CD14-positive monocyte (primary cell): ENCODE measurements at regions of chr21 and their contacts with region 1.

Region 1: DNA sequence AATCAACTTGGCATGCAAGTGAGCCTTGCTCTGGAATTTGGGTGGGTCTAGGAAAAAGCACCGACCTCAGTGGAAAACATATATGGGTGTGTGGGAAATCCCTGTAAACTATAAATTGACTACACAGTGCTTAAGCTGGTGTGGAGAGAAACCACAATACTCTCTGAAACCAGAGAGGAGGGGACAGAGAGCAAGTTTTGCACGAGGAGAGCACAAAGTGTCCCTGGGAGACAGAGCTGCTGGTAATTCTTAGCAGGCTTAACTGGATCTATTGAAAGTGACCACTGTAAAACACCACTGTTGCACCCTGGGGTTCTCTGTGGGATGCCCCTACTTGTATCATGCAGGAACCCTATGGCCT is 12.8 kb downstream of the KCNJ15 start:
- DNase-seq: no peak
- H3K4me3 ChIP-seq: no peak overlapping the region
- H3K4me3 Mint-ChIP-seq: no peak overlapping the region
- H3K27ac ChIP-seq: no peak overlapping the region
- H3K27ac Mint-ChIP-seq: peak overlapping the region in 1 of 7 donors; percentile 54
- H3K4me1 ChIP-seq: peaks cover 74 to 95% of the 10 kb centered on the region in 2 donors
- H3K4me1 Mint-ChIP-seq: peaks cover 87% of the 10 kb centered on the region
- H3K27me3 ChIP-seq: no peaks in the 10 kb centered on the region
- H3K27me3 Mint-ChIP-seq: peaks cover 0 to 3% (median 0%) of the 10 kb centered on the region in 3 donors
- CTCF ChIP-seq: no peak

Region 2: DNA sequence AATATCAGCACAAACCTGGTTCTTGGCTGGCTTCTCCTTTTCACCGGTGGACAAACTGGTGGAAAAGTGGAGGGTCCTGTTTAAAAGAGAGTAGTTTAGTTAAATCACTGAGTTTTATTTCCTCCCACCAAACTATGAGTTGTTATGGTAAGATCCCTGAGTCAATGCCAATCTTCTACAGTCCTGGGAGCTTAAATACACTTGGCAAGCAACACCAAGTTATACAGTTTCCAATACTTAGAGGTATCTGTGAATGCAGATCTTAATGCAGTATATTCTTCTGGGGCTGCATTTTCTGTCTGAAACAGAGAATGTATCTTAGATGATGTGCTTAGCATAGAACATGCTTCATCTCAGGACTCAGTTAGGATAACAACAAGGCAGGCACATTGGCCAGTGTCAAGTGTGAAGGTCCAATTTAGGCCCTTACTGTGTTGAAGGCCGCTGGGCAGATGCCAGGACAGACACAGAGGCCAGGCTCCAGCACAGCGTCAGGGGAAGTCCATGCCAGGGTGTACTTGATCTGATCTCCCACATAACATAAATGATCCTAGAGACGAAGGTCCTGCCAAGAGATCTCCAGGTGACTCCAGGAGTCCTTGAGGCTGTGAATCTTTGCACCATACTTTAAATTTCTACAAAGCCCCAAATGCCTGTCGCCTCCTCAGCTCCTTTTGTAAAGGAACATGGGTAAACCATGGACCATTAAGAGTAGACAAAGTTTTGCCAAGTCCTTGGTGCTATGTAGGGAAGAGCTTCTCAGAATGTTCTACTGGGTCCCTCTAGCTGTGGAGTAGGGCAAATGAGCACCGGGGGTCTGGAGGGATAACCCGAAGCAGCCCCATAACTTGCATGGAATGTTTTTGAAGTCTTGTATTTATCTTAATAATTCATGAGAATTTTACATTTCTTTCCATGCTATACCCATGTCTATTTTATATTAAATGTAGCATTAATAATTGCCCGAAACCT is 64.0 kb after region 1 on chr21:
- intact Hi-C with region 1: loop called in 1 of 2 experiments (anchors 10 kb)
- DNase-seq: peak in 1 of 3 donors; percentile 18
- H3K4me3 ChIP-seq: no peak overlapping the region
- H3K4me3 Mint-ChIP-seq: no peak overlapping the region
- H3K27ac ChIP-seq: no peak overlapping the region
- H3K27ac Mint-ChIP-seq: peak overlapping the region in 2 of 7 donors; percentile 48 to 68
- H3K4me1 ChIP-seq: peaks cover 10 to 20% of the 10 kb centered on the region in 2 donors
- H3K4me1 Mint-ChIP-seq: peaks cover 28% of the 10 kb centered on the region
- H3K27me3 ChIP-seq: no peaks in the 10 kb centered on the region
- H3K27me3 Mint-ChIP-seq: peaks cover 0 to 7% (median 2%) of the 10 kb centered on the region in 3 donors
- CTCF ChIP-seq: peak; percentile 7